Sigmoid colon (tissue), 7 donors: ENCODE measurements at regions of chrX and their contacts with region 1.

Region 1: DNA sequence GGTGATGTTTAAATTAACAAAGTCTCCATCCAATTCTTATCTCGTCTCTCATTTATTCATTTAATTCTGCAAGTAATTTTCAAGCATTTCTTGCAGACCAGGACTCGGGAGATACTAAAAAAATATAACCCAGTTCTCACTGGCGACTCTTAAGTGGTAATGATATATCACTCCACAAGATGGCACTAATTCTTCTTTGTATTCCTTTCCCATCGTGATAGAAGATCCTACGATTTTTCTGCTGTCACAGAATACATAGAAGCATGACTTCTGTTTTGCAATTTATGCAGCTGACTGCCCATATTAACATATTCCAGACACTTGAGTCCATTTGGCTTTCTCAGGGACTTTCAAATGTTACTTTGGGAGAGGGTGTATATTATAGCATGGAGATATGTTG is 64.0 kb upstream of the FGF13 start:
- DNase-seq: no peak
- H3K4me3 ChIP-seq: no peak overlapping the region
- H3K27ac ChIP-seq: no peak overlapping the region
- H3K4me1 ChIP-seq: no peaks in the 10 kb centered on the region
- H3K27me3 ChIP-seq: no peaks in the 10 kb centered on the region
- CTCF ChIP-seq: peak in 1 of 4 experiments; percentile 29
- EP300 ChIP-seq: no peak
- POLR2A ChIP-seq: no peak

Region 2: DNA sequence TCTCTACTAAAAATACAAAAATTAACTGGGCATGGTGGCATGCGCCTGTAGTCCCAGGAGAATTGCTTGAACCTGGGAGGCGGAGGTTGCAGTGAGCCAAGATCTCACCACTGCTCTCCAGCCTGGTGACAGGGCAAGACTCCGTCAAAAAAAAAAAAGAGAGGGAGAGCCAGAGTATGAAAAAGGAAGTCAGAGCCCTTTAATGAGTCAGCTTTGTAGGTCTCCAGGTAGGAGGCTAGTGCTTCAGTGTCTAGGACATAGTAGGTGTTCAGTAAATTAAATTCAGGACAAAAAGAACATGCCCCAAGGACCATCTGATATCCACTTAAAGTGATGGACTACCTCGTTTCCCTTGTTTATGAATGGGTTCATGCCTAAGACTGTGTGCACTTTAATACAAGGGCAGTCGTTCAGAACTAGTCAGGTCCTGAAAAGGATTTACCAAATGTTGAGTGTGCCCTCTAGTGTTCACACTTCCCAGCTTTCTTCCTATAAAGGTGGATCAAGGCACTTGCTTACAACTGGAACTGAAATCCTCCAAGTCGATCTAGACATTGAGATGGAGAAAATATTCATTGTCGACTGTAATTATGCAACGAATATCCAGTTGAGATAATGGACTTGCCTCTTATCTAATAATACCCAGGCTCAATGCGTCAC is 784.0 kb after region 1 on chrX:
- intact Hi-C with region 1: loop called (anchors 2 kb)
- DNase-seq: no peak
- H3K4me3 ChIP-seq: no peak overlapping the region
- H3K27ac ChIP-seq: no peak overlapping the region
- H3K4me1 ChIP-seq: no peaks in the 10 kb centered on the region
- H3K27me3 ChIP-seq: no peaks in the 10 kb centered on the region
- CTCF ChIP-seq: peak in 2 of 4 experiments; percentile 9 to 37
- EP300 ChIP-seq: no peak
- POLR2A ChIP-seq: no peak